ENCODE measurements at regions of chr7 and their contacts with region 1.

Region 1: DNA sequence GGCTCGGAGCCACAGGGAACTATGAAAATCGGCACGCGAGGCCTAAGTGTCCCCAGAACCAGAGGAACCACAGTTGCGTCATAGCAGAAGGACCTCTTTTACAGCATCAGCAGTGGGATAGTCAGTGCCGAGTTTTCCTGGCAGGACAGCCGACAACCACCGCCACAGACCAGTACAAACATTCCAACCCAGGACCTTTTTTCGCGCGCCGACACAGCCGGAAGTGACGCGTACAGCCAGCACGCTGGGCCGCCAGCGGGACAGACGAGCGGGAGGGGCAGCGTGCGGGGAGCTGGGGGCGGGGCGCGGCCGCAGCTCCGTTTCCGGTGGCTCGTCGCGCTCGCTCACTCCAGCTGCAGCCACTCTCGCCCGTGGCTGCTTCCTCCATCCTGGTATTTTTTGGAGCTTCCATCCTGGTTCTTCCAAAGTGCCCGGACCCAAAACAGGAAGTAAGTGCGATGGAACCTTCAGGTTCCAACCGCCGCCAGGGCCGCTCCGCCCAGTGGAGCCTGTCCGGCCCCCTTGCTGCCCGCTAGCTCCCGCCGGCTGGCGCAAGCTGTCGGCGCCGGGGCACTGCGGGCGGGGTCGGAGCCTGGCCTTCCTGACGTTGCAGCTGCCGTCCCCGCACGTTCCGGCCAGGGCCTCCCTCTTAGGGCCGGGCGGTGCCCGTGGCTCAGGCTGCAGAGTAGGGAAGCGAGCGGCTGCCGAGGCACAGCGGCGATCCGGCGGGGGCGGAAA is at the start of gene DMTF1:
- DNase-seq: peak in 1 of 2 donors; percentile 98
- H3K4me3 ChIP-seq: peak within 1 kb of the TSS; percentile 78 to 90
- H3K27ac ChIP-seq: peak within 1 kb of the TSS; percentile 97
- H3K4me1 ChIP-seq: peaks cover 39% of the 10 kb centered on the region
- H3K27me3 ChIP-seq: no peaks in the 10 kb centered on the region
- CTCF ChIP-seq: no peak
- POLR2A ChIP-seq: peak in 1 of 2 donors; percentile 62
- total RNA-seq, gene DMTF1: 86.9 TPM

Region 2: GRCh38 chr7:86991771-86992191 is 160.5 kb before region 1 on chr7:
- intact Hi-C with region 1: no loop called
- DNase-seq: no peak
- H3K4me3 ChIP-seq: no peak overlapping the region
- H3K27ac ChIP-seq: no peak overlapping the region
- H3K4me1 ChIP-seq: no peaks in the 10 kb centered on the region
- H3K27me3 ChIP-seq: no peaks in the 10 kb centered on the region
- CTCF ChIP-seq: no peak
- POLR2A ChIP-seq: no peak

Region 3: DNA sequence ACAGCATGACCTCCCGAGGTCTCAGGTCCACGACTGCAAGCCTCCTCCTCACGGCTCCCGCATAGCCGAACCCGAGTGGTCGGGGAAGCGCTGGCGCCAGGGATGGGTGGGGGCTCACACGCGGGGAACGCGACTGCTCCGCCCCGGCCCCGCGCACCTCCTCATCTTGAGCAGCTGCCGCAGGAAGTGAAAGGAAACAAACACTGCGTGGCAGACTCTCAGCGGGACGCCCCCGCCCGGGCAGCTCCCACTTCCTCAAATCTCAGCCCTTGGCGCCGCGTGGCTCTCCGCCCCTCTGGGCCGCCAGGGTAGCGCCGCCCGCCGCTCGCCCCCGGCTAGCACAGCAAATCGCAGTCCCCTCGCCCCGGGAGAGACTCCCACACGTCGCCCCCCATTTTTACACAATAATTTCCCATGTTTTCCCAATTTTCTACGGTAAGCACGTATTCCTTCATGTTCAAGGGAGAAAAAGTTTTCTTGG is 67.3 kb after region 1 on chr7 and contains the start of gene TMEM243:
- intact Hi-C with region 1: loop called (anchors 10 kb)
- DNase-seq: no peak
- H3K4me3 ChIP-seq: peak within 1 kb of the TSS; percentile 77 to 79
- H3K27ac ChIP-seq: peak within 1 kb of the TSS; percentile 87
- H3K4me1 ChIP-seq: peaks cover 36% of the 10 kb centered on the region
- H3K27me3 ChIP-seq: no peaks in the 10 kb centered on the region
- CTCF ChIP-seq: no peak
- POLR2A ChIP-seq: peak in 1 of 2 donors; percentile 52
- total RNA-seq, gene TMEM243: 36.6 TPM